ENCODE measurements at regions of chr6 and their contacts with region 1.

Region 1: GRCh38 chr6:30396833-30397479 is 52.0 kb downstream of the RPP21 start:
- DNase-seq: peak; percentile 96
- ATAC-seq: peak; percentile 98
- H3K4me3 Mint-ChIP-seq: peak overlapping the region; percentile 13; the same call in 1 of the 2 replicates
- H3K27ac Mint-ChIP-seq: no peak overlapping the region
- H3K4me1 Mint-ChIP-seq: 0 out of 2 replicates have a peak, but pooled peaks cover 7% of the 10 kb centered on the region
- H3K27me3 Mint-ChIP-seq: peaks cover 36% of the 10 kb centered on the region
- CTCF ChIP-seq: peak; percentile 78

Region 2: GRCh38 chr6:30154709-30155519 is 242.0 kb before region 1 on chr6:
- CTCF ChIA-PET with region 1: no interaction called
- POLR2A ChIA-PET with region 1: no interaction called
- DNase-seq: no peak
- ATAC-seq: no peak
- H3K4me3 Mint-ChIP-seq: no peak overlapping the region
- H3K27ac Mint-ChIP-seq: no peak overlapping the region
- H3K4me1 Mint-ChIP-seq: no peaks in the 10 kb centered on the region
- H3K27me3 Mint-ChIP-seq: peaks cover 36% of the 10 kb centered on the region
- CTCF ChIP-seq: no peak

Region 3: DNA sequence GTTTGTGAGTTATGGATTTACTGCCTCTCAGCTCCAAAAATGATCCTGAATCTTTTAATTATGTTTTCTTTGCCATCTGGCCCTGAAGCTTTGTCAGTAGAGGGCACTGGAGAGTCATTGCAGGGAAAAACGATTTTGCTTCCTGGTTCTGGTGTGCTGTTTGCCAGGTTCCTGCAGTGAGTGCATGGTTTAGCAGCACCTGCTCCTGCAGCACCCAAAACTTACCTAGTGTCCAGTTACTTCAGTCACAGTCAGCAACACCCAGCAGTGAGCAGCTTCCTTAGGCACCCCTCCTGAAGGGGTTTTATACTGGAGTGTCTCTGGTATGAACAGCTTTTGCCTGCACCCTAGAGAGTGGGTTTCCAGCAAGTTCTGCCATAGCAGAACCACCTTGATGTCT is 177.7 kb before region 1 on chr6:
- CTCF ChIA-PET with region 1: interaction called, 25 read pairs
- POLR2A ChIA-PET with region 1: no interaction called
- DNase-seq: peak; percentile 44
- ATAC-seq: peak; percentile 81
- H3K4me3 Mint-ChIP-seq: no peak overlapping the region
- H3K27ac Mint-ChIP-seq: no peak overlapping the region
- H3K4me1 Mint-ChIP-seq: peaks cover 15% of the 10 kb centered on the region
- H3K27me3 Mint-ChIP-seq: peaks cover 32% of the 10 kb centered on the region
- CTCF ChIP-seq: peak; percentile 28; the same call in 1 of the 2 replicates

Region 4: DNA sequence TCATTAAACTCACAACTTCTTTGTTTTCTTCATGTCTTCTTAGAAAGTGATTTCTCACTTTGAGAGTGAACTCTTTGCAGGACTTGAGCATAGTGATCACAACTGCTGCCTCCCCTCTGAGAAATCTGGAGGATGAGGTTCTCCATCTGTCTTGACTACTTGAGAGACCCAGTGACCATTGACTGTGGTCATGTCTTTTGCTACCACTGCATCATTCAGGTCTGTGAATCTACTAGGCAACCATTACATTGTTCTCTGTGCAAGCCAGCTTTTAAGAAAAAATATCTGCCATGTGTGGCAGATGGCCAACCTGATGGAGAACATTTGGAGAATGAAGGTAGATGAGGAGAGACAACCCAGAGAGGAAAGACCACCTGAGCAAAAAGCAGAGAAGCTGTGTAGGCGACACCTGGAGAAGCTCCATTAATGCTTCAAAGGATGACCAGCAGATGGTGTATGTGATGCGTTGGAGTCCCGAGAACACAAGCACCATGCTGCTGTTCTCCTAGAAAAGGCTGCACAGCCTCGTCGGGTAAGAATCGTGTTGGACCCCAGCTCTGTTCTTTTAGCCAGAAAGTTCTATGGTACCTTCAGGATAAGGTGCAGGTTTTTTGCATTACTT is 158.7 kb before region 1 on chr6:
- CTCF ChIA-PET with region 1: interaction called, 19 read pairs
- POLR2A ChIA-PET with region 1: no interaction called
- DNase-seq: peak; percentile 27
- ATAC-seq: peak; percentile 88
- H3K4me3 Mint-ChIP-seq: no peak overlapping the region
- H3K27ac Mint-ChIP-seq: no peak overlapping the region
- H3K4me1 Mint-ChIP-seq: no peaks in the 10 kb centered on the region
- H3K27me3 Mint-ChIP-seq: peaks cover 36% of the 10 kb centered on the region
- CTCF ChIP-seq: no peak

Region 5: DNA sequence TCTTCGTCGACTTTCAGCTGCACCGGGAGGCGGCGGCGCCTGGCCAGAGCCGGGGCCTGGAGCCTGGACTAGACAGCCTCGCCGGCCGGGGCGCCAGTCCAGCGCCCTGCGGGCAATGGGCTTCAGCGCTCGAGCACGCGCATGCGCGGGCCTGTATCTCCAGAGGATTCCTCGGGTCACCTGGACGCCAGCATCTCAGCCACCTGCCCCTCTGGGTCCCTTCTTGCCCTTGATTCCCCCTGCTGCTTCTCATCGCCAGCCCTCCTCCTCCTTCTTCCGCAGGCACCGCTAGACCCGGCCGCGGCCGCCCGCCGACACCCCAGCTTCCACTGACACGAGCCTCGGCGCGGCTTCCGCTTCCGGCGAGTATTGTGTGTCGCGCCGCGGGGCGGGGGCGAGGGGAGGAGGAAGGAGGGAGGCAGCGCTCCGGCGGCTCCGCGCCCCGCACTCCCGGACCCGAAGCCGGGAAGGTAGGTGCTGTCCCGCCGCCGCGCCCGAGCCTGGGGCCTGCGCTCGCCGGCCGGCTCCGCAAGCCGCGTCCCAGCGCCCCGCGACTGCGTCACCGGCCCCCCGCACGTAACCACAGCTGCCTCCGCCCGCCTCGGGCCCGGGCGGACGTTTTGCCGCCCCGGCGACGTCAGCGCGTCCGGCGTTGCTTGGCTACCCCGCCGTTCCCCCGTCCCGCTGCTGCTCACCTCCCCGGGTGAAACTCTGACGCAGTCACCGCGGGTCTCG is 70.3 kb before region 1 on chr6 and contains the start of gene TRIM39:
- CTCF ChIA-PET with region 1: interaction called, 12 read pairs
- POLR2A ChIA-PET with region 1: no interaction called
- DNase-seq: peak; percentile 77
- ATAC-seq: peak; percentile 27
- H3K4me3 Mint-ChIP-seq: peak within 1 kb of the TSS; percentile 82
- H3K27ac Mint-ChIP-seq: peak within 1 kb of the TSS; percentile 99
- H3K4me1 Mint-ChIP-seq: peaks cover 48% of the 10 kb centered on the region
- H3K27me3 Mint-ChIP-seq: no peaks in the 10 kb centered on the region; the same call in 1 of the 2 replicates
- CTCF ChIP-seq: no peak
- total RNA-seq, gene TRIM39: 22.7 to 24.9 TPM (median 24.0 TPM) in 3 replicates

Region 6: DNA sequence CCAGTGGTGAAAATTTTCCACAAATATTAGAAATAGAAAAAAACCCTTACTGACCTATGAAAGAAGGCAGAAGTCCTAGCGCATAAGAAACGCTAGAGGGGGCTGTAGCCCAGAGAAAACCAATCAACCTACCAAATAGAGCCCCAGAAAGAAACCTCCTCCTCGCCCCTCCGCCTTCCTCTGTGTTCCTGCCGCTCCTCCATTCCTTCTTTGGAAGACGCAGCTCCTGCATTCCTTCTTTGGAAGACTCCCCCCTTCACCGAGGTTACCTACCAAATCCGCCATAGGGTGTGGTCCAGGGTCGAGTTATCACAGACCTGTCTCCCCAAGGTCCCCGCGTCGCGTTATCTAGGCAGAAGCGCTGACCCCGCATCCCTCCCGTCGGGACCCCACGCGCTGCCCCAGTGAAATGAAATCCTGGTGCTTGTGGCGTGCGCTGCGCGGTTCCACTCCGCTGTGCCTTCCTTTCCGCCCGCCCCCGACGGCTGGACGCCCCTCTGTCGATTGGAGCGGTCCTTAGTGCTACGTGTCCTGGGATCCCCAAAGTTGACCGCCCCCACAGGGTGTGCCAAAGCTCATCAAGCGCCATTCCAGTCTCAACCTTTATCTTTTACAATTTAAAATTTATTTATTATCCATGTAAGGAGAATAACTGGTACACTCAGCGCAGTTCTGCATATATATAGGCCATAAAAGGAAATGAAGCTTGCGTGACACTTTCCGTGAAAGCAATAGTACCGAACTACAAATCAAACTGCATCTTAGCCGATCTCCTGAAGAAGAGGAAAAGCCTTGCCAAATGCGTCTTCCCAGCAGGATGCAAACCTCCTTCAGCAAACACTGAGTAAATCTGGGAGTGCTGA is 39.0 kb before region 1 on chr6:
- CTCF ChIA-PET with region 1: interaction called, 75 read pairs
- POLR2A ChIA-PET with region 1: no interaction called
- DNase-seq: peak; percentile 81
- ATAC-seq: peak; percentile 85
- H3K4me3 Mint-ChIP-seq: peak overlapping the region; percentile 87
- H3K27ac Mint-ChIP-seq: no peak overlapping the region
- H3K4me1 Mint-ChIP-seq: peaks cover 8% of the 10 kb centered on the region; the same call in 1 of the 2 replicates
- H3K27me3 Mint-ChIP-seq: peaks cover 50% of the 10 kb centered on the region
- CTCF ChIP-seq: peak; percentile 61

Region 7: GRCh38 chr6:30364591-30364990 is 32.4 kb before region 1 on chr6:
- CTCF ChIA-PET with region 1: interaction called, 75 read pairs
- POLR2A ChIA-PET with region 1: no interaction called
- DNase-seq: peak; percentile 23
- ATAC-seq: peak; percentile 79
- H3K4me3 Mint-ChIP-seq: no peak overlapping the region
- H3K27ac Mint-ChIP-seq: no peak overlapping the region
- H3K4me1 Mint-ChIP-seq: peaks cover 5% of the 10 kb centered on the region
- H3K27me3 Mint-ChIP-seq: peaks cover 42% of the 10 kb centered on the region
- CTCF ChIP-seq: no peak

Region 8: GRCh38 chr6:30411515-30412207 is 14.7 kb after region 1 on chr6:
- CTCF ChIA-PET with region 1: interaction called, 25 read pairs
- POLR2A ChIA-PET with region 1: no interaction called
- DNase-seq: peak; percentile 80
- ATAC-seq: peak; percentile 97
- H3K4me3 Mint-ChIP-seq: peak overlapping the region; percentile 53
- H3K27ac Mint-ChIP-seq: no peak overlapping the region
- H3K4me1 Mint-ChIP-seq: peaks cover 6% of the 10 kb centered on the region
- H3K27me3 Mint-ChIP-seq: peaks cover 73% of the 10 kb centered on the region
- CTCF ChIP-seq: peak; percentile 79